ENCODE measurements at regions of chr11 and their contacts with region 1.

Region 1: DNA sequence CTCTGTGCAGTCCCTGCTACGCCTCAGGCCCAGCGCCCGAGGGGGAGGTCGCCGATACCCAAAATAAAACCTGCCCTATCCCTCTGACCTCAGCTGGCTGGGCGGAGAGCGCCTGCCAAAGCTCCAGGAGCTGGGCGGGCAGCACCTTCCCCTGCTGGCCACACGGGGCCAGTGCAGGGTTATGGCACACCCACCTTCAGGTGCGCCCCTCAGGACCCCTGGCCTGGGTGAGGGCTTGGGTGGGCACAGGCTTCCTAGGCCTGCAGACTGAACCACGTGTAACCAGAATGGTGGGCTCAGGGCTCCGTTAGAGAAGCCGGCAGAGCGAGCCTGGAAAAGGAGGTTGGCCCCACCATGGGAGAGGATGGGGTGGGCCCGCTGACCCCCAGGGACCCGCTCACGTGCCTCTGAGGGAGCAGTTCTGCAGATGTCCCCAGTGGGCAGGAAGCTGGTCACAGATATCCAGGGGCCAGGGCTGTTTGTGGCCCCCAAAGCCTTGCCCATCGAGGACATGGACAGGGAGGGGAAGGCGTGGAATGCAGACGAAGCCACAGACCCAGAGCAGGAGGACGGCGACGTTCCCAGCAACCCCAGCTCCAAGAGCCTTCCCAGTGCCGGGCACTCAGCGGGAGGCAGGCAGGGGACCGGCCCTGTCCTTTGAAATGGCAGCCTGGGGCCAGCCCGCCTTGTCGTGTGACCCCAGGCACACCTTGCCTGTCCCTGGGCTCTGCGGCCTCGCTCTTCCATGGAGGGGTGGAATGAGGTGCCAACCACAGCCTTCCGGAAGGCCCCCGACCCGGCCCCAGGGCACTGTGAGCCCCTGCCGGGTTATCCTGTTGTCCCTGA is 1.6 kb upstream of the TNNT3 start:
- DNase-seq: peak; percentile 49
- ATAC-seq: peak; percentile 86
- H3K4me3 Mint-ChIP-seq: no peak overlapping the region
- H3K27ac Mint-ChIP-seq: no peak overlapping the region
- H3K4me1 Mint-ChIP-seq: no peaks in the 10 kb centered on the region
- H3K27me3 Mint-ChIP-seq: no peaks in the 10 kb centered on the region; the same call in 1 of the 2 replicates
- CTCF ChIP-seq: peak; percentile 55; the same call in 1 of the 2 replicates

Region 2: DNA sequence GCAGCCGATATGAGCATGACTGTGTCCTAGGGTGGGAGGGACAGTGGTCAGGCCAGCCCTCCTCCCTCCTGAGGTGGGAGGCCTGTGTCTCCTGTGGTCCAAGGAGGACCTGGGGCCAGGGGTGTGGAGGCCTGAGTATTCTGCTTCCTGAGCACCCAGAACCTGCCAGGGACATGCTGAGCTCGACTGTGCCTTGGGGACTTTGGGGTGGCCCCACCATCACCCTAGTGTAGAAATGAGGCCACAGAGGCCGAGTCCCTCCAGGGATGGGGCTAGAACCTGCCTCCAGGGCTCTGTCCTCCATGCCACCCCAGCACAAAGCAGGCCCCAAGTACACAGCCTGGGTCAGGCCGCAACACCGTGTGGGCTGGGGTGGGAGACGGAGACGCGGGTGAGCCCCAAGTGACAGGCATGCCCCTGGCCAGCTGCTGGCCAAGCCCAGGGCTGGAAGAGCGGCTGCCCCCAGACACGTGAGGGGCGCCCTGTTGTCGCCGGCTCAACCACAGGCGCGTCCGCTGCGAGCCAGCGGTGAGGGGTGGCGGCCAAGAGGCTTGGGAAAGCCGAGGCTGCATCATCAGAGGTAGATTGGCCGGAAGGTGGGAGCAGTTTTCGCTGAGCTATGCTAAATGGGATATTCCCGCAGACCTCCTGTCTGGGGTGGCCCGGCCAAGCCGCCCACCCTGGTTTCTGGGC is 27.2 kb before region 1 on chr11:
- CTCF ChIA-PET with region 1: interaction called, 14 read pairs
- POLR2A ChIA-PET with region 1: no interaction called
- DNase-seq: no peak
- ATAC-seq: no peak
- H3K4me3 Mint-ChIP-seq: no peak overlapping the region
- H3K27ac Mint-ChIP-seq: no peak overlapping the region
- H3K4me1 Mint-ChIP-seq: no peaks in the 10 kb centered on the region
- H3K27me3 Mint-ChIP-seq: no peaks in the 10 kb centered on the region; the same call in 1 of the 2 replicates
- CTCF ChIP-seq: no peak

Region 3: DNA sequence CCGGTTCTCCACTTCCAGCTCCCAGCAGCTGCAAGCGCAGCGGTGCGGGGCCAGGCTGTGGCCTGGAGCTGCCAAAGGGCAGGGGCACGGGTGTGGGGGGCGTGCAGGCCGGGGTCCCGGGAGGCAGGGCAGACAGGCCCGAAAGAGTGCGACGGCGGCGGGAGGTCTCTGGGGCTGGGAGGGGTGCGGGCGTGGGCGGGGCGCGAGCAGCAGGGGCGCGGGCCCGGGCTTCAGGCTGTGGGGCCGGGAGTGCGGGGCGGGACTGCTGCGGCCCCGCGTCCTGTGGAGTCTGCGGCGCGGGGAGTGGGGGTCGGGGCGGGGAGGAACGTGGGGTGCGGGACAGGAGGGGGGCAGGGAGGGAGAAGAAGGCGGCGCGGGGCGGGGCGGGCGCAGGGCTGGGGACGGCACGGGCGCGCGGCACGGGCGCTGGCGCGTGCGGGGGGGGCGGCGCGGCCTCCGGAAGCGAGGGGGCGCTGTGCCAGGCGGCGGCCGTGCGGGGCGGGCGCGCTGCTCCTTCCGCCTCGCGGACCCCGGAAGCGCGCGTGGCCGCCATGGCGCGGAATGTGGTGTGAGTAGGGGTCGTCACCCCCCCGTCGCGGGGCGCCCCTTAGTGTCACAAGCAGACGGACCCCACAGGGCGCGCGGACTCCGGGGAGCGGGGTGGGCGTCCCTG is 29.1 kb after region 1 on chr11 and contains the start of gene MRPL23:
- CTCF ChIA-PET with region 1: interaction called, 10 read pairs
- POLR2A ChIA-PET with region 1: no interaction called
- DNase-seq: no peak
- ATAC-seq: peak; percentile 27
- H3K4me3 Mint-ChIP-seq: no peak within 1 kb of the TSS
- H3K27ac Mint-ChIP-seq: no peak within 1 kb of the TSS
- H3K4me1 Mint-ChIP-seq: peaks cover 3% of the 10 kb centered on the region
- H3K27me3 Mint-ChIP-seq: no peaks in the 10 kb centered on the region
- CTCF ChIP-seq: no peak
- total RNA-seq, gene MRPL23: 59.4 to 73.0 TPM (median 61.0 TPM) in 3 replicates

Measured in WTC11 (cell line).